Calu3 (cell line): ENCODE measurements at regions of chr3 and their contacts with region 1.

Region 1: DNA sequence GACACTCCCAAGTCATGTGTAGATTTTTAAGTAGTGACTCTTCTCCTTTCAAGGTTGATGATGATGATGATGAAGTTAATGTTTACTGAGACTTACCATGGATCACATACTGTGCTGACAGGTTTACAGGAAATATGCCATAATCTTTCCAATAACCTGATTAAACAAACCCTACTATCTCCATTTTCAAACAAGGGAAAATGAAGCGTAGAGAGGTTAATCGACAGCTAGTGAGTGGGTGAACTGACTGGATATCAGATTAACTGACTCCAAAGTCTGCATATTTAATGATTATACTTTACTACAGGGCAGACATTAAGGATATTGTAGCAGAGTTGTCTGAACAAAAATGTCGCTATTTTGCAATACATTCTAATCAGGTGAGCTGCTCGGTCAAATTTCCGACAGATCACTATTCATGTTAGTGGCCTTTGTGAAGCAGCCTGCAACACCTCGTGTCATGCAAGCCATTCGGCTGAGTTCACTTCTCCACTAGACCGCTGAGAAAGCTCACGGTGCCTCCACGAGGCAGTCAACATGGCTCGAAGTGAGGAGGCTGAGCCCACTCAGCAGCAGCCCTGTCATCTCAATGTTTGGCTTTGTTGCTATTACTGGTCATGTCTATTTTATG is 264.2 kb downstream of the NFKBIZ start:
- DNase-seq: peak; percentile 79
- H3K4me3 Mint-ChIP-seq: peak overlapping the region; percentile 30
- H3K27ac Mint-ChIP-seq: peak overlapping the region; percentile 97
- H3K4me1 Mint-ChIP-seq: peaks cover 44% of the 10 kb centered on the region
- H3K27me3 Mint-ChIP-seq: no peaks in the 10 kb centered on the region
- CTCF ChIP-seq: no peak

Region 2: DNA sequence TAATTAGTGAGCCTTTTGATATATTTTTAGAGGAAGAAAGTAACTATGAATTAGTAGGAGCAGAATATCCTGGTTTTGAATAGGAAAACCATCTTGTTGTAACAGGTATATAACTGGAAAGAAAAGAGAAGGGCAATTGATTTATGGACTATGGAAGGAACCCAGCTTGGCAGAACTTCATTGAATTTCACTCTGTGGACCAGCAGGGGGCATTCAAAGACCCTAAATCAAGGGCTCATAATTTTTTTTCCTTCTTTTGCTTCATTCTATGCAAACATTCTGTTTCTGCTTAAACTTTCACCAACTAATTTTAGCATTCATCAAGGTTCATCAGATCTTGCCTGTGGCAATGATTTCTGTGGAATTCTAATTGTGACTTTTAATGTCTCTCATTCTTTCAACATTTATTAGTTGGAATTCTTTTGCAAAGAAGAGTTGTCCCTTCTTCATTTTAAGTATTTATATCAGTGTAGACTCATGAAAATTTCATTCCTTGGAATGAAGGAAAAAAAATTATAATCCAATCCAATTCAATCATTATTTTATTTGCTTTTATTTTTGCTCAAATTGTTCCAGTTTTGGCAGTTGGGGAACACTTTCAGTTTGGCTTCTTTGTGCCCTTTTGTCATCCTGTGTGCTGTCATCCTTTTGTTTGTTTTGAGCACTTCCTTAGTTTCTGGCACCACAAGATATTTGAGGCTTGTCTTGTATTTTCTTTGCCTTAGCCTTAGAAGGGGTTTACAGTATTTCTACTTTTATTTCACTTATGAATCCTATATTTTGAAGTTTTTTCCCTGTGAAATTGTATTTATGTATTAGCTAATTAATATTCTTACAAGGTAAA is 304.1 kb before region 1 on chr3:
- CTCF ChIA-PET with region 1: no interaction called
- intact Hi-C with region 1: loop called (anchors 1 kb)
- DNase-seq: peak; percentile 34
- H3K4me3 Mint-ChIP-seq: no peak overlapping the region
- H3K27ac Mint-ChIP-seq: no peak overlapping the region
- H3K4me1 Mint-ChIP-seq: no peaks in the 10 kb centered on the region
- H3K27me3 Mint-ChIP-seq: no peaks in the 10 kb centered on the region
- CTCF ChIP-seq: peak; percentile 47

Region 3: DNA sequence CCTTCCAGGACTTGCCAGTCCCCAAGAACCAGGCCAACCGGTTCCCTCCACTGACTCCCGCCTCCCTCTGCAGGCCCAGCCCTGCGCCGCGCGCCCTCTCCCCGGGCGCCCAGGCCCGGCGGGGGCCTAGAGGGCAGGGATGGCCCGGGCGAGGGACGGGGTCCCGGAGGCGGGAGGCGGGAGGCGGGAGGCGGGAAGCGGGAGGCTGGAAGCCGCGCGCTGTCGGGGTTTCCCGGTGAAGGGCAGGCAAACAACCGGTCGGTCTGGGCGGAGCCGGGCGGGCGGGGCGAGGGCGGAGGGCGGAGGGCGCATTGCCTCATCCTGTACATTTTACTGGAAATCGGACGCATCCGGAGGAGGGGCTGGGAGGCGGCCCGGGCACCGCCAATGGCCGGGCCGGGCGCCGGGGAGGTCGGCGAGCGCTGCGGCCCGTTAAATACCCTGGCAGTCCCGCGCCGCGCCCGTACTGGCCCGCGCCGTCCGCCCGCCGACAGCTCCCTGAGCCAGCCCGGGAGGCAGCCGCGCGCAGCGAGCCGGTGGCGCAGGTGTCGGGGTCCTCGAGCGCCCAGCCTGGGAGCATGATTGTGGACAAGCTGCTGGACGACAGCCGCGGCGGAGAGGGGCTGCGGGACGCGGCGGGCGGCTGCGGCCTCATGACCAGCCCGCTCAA is 264.3 kb before region 1 on chr3 and contains the start of gene NFKBIZ:
- CTCF ChIA-PET with region 1: no interaction called
- intact Hi-C with region 1: no loop called
- DNase-seq: peak; percentile 94
- H3K4me3 Mint-ChIP-seq: peak within 1 kb of the TSS; percentile 75
- H3K27ac Mint-ChIP-seq: peak within 1 kb of the TSS; percentile 92
- H3K4me1 Mint-ChIP-seq: peaks cover 24% of the 10 kb centered on the region
- H3K27me3 Mint-ChIP-seq: no peaks in the 10 kb centered on the region
- CTCF ChIP-seq: no peak
- total RNA-seq, gene NFKBIZ: 217 and 227 TPM in 2 replicates

Region 4: GRCh38 chr3:101926594-101927105 is 186.9 kb before region 1 on chr3:
- CTCF ChIA-PET with region 1: interaction called, 3 read pairs
- intact Hi-C with region 1: loop called (anchors 2 kb)
- DNase-seq: no peak
- H3K4me3 Mint-ChIP-seq: peak overlapping the region; percentile 52
- H3K27ac Mint-ChIP-seq: peak overlapping the region; percentile 90
- H3K4me1 Mint-ChIP-seq: peaks cover 41% of the 10 kb centered on the region
- H3K27me3 Mint-ChIP-seq: no peaks in the 10 kb centered on the region
- CTCF ChIP-seq: no peak

Region 5: DNA sequence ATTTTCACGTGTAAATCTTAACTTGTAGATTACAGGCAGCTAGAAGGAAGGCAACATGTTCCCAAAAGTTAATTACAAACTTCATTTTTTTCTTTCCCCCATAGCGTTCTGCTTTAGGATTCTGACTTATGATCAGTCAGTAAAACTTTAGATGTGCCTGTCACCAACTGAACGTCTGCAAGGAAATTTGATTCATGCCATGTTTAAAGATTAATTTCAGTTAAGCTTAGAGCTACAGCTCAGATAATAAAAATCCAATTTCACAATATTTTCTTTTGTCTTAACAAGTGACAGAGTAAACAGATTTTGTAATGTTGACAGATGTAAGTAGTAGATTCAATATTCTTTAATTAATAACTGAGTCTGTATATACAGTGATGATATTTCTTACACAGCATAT is 11.1 kb before region 1 on chr3:
- CTCF ChIA-PET with region 1: interaction called, 20 read pairs
- intact Hi-C with region 1: no loop called
- DNase-seq: no peak
- H3K4me3 Mint-ChIP-seq: peak overlapping the region; percentile 34
- H3K27ac Mint-ChIP-seq: peak overlapping the region; percentile 77
- H3K4me1 Mint-ChIP-seq: peaks cover 42% of the 10 kb centered on the region
- H3K27me3 Mint-ChIP-seq: no peaks in the 10 kb centered on the region
- CTCF ChIP-seq: no peak

Region 6: DNA sequence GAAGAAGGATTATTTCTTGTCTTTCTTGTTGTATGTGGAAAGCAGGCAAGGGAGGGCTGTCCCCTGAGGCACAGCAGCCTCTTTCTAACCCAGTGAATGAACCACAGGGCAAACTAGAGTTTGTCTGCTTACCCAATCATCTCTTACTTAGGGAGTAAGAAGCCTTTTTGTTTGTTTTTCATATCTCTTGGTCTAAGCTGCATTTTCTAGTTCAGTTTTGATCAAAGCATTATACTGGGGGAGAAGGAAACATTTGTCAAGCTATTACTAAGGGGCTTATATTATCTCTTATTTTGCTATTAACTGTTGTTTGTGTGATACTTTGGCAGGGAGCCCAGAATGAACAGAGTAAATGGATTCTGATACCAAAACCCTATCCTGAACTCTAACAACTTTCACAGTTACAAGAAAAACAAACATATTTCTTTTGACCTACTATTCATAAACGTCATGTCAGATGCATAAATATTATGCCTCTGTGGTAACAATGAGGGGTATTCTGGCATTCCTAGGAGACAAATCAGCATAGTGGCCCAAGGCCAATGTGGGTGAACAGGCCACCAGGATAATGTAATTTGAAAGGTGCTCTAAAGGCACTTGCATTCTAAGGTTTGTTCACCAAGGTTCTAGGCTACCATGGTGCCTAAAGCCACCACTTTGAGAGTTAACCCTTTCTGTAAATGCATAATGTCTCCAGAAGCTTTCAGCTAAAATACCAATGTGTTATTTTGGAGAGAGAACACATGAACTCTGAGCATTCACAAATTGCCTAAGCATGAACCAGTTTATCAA is 49.7 kb after region 1 on chr3:
- CTCF ChIA-PET with region 1: no interaction called
- intact Hi-C with region 1: loop called (anchors 1 kb)
- DNase-seq: peak; percentile 65
- H3K4me3 Mint-ChIP-seq: peak overlapping the region; percentile 27
- H3K27ac Mint-ChIP-seq: peak overlapping the region; percentile 98
- H3K4me1 Mint-ChIP-seq: peaks cover 30% of the 10 kb centered on the region
- H3K27me3 Mint-ChIP-seq: no peaks in the 10 kb centered on the region
- CTCF ChIP-seq: no peak